B cell (primary cell): ENCODE measurements at regions of chrX and their contacts with region 1.

Region 1: DNA sequence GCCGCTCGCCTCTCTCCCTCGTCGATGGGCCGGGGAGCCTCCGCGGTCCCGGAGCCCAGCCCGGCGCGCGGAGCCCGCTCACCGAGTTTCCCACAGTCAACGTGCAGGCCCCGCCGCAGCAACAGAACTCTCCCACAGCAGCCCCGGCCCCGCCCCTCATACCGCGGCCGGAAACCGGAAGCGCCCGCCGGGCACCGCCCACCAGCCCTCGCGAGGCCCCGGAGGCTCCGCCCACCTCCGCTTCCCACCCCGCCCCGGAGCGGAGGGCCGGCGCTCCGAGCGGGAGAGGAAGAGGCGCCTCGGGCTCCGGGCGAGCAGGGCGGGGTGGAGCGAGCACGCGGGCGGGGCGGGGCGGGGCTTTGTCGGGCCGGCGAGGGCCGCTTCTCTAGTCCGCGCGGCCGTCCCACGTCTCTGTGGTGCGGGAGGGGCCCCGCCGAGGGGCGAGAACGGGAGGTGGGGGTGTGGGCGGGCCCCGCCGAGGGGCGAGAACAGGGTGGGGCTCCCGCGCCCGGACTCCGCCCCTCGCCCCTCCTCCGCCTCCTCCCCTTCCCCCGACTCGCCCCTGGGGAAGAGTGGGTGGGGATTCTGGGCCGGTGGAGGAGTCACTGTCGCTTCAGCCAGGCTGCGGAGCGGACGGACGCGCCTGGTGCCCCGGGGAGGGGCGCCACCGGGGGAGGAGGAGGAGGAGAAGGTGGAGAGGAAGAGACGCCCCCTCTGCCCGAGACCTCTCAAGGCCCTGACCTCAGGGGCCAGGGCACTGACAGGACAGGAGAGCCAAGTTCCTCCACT is at the starts of genes ABCD1 and BCAP31:
- DNase-seq: peak; percentile 93
- ATAC-seq: peak; percentile 72
- H3K4me3 ChIP-seq: peak within 1 kb of the TSS in 4 of 5 experiments; percentile 58 to 74 (median 64)
- H3K4me3 Mint-ChIP-seq: peak within 1 kb of the TSS; percentile 88
- H3K27ac ChIP-seq: peak within 1 kb of the TSS; percentile 81 to 86
- H3K27ac Mint-ChIP-seq: peak within 1 kb of the TSS; percentile 92
- H3K4me1 ChIP-seq: peaks cover 37 to 42% of the 10 kb centered on the region in 2 donors
- H3K4me1 Mint-ChIP-seq: peaks cover 40% of the 10 kb centered on the region
- H3K27me3 ChIP-seq: no peaks in the 10 kb centered on the region
- H3K27me3 Mint-ChIP-seq: no peaks in the 10 kb centered on the region
- CTCF ChIP-seq: no peak
- total RNA-seq, gene ABCD1: 9.7 and 10.9 TPM in 2 replicates
- total RNA-seq, gene BCAP31: 112 and 117 TPM in 2 replicates

Region 2: GRCh38 chrX:153599192-153600031 is 125.0 kb before region 1 on chrX:
- CTCF ChIA-PET with region 1: no interaction called
- POLR2A ChIA-PET with region 1: no interaction called
- intact Hi-C with region 1: loop called (anchors 1 kb)
- DNase-seq: peak; percentile 90
- ATAC-seq: peak; percentile 84
- H3K4me3 ChIP-seq: peak overlapping the region; percentile 40 to 77 (median 73)
- H3K4me3 Mint-ChIP-seq: peak overlapping the region; percentile 82
- H3K27ac ChIP-seq: peak overlapping the region; percentile 18 to 64
- H3K27ac Mint-ChIP-seq: peak overlapping the region; percentile 67
- H3K4me1 ChIP-seq: peaks cover 29 to 41% of the 10 kb centered on the region in 2 donors
- H3K4me1 Mint-ChIP-seq: peaks cover 41% of the 10 kb centered on the region
- H3K27me3 ChIP-seq: no peaks in the 10 kb centered on the region
- H3K27me3 Mint-ChIP-seq: no peaks in the 10 kb centered on the region
- CTCF ChIP-seq: no peak

Region 3: DNA sequence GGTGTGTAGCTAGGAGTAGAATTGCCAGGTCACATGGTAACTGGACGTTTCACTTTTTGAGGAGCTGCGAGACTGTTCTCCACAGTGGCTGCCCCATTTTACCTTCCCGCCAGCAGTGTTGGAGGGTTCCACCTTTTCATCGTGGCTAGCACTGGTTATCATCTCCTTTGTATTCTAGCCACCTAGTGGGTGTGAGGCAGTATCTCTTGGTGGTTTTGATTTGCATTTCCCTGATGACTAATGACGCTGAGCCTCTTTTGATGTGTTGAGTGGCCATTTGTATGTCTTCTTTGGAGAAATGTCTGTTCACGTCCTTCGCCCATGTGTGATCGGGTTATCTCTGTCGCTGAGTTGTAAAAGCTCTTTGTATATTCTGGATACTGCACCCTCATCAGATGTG is 10.8 kb after region 1 on chrX:
- CTCF ChIA-PET with region 1: interaction called, 3 read pairs
- POLR2A ChIA-PET with region 1: interaction called, 4 read pairs
- intact Hi-C with region 1: loop called (anchors 1 kb)
- DNase-seq: peak; percentile 27
- ATAC-seq: peak; percentile 69
- H3K4me3 ChIP-seq: no peak overlapping the region
- H3K4me3 Mint-ChIP-seq: peak overlapping the region; percentile 8
- H3K27ac ChIP-seq: no peak overlapping the region
- H3K27ac Mint-ChIP-seq: no peak overlapping the region
- H3K4me1 ChIP-seq: peaks cover 3 to 14% of the 10 kb centered on the region in 2 donors
- H3K4me1 Mint-ChIP-seq: peaks cover 22% of the 10 kb centered on the region
- H3K27me3 ChIP-seq: no peaks in the 10 kb centered on the region
- H3K27me3 Mint-ChIP-seq: no peaks in the 10 kb centered on the region
- CTCF ChIP-seq: no peak

Region 4: DNA sequence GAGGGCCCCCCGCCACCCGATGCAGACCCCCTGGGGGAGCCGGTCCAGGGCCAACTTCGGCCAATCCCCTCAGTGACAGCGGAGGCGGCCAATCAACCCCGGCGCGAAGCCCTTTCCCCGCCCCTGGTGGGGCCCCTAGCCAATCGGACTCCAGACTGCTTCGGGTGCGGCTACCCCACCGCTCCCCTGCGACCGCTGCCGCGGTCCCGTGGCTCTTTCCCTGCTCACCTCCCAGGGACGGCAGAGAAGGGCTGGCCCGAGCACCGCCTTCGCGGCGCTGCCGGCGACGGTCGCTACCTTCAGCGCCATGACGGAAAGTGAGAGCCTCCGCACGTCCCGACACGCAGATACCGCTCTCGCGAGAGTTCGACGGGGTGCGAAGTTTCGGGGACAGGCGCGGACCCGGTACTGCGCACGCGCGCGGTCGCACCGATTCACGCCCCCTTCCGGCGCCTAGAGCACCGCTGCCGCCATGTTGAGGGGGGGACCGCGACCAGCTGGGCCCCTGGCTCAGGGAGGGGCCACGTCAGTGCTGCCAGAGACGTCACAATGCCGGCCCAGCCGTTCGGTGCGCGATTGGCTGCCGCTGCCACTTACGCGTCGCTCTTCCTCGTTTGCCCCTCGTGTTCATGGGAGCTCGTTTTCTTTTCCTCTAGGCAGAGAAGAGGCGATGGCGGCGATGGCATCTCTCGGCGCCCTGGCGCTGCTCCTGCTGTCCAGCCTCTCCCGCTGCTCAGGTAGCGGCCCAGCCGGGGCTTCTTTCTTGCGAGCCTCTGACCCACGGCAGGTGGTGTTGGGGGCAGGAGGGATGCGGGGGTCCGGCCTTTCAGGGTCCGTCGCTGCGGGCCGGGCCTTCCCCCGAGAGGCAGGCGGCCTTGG is 69.8 kb after region 1 on chrX and contains the starts of genes IDH3G and SSR4:
- CTCF ChIA-PET with region 1: no interaction called
- POLR2A ChIA-PET with region 1: interaction called, 3 read pairs
- intact Hi-C with region 1: loop called (anchors 1 kb)
- DNase-seq: peak; percentile 96
- ATAC-seq: peak; percentile 92
- H3K4me3 ChIP-seq: peak within 1 kb of the TSS; percentile 43 to 80 (median 80)
- H3K4me3 Mint-ChIP-seq: peak within 1 kb of the TSS; percentile 93
- H3K27ac ChIP-seq: peak within 1 kb of the TSS; percentile 87 to 90
- H3K27ac Mint-ChIP-seq: peak within 1 kb of the TSS; percentile 97
- H3K4me1 ChIP-seq: peaks cover 16 to 24% of the 10 kb centered on the region in 2 donors
- H3K4me1 Mint-ChIP-seq: peaks cover 30% of the 10 kb centered on the region
- H3K27me3 ChIP-seq: no peaks in the 10 kb centered on the region
- H3K27me3 Mint-ChIP-seq: no peaks in the 10 kb centered on the region
- CTCF ChIP-seq: no peak
- total RNA-seq, gene IDH3G: 58.5 and 62.8 TPM in 2 replicates
- total RNA-seq, gene SSR4: 119 and 134 TPM in 2 replicates